AG04449 (cell line): ENCODE measurements at regions of chr10 and their contacts with region 1.

Region 1: GRCh38 chr10:122565728-122566206 is 5.2 kb downstream of the DMBT1 start:
- DNase-seq: peak; percentile 41
- H3K4me3 ChIP-seq: peak overlapping the region; percentile 10; the same call in 1 of the 2 replicates
- CTCF ChIP-seq: peak; percentile 80

Region 2: DNA sequence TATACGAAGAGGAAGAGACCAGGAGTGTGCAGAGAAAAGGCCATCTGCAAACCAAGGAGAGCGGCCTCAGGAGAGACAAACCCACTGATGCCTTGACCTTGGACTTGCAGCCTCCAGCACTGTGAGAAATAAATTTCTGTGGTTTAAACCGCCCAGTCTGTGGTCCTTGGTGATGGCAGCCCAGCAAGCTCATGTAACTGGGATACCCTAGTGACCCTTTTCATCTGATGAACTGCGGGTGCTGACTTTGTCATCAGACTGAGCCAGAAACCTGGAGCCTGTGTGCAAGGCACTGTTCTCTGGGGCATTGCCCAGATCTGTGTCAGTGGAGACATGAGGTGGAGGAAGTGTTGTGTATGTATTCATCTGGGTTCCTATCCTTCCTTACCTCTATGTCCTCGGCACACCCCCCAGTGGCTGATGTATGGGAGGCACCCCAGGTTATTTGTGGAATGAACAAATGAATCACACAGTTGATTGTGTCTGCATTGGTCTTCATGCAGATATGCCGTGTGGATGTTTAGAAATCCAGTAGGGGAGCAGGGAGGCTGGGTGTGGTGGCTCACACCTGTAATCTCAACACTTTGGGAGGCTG is 359.2 kb before region 1 on chr10:
- CTCF ChIA-PET with region 1: no interaction called
- POLR2A ChIA-PET with region 1: no interaction called
- DNase-seq: no peak
- H3K4me3 ChIP-seq: no peak overlapping the region
- CTCF ChIP-seq: no peak

Region 3: GRCh38 chr10:122323941-122324675 is 241.7 kb before region 1 on chr10:
- CTCF ChIA-PET with region 1: interaction called, 10 read pairs
- POLR2A ChIA-PET with region 1: no interaction called
- DNase-seq: no peak
- H3K4me3 ChIP-seq: no peak overlapping the region
- CTCF ChIP-seq: no peak

Region 4: DNA sequence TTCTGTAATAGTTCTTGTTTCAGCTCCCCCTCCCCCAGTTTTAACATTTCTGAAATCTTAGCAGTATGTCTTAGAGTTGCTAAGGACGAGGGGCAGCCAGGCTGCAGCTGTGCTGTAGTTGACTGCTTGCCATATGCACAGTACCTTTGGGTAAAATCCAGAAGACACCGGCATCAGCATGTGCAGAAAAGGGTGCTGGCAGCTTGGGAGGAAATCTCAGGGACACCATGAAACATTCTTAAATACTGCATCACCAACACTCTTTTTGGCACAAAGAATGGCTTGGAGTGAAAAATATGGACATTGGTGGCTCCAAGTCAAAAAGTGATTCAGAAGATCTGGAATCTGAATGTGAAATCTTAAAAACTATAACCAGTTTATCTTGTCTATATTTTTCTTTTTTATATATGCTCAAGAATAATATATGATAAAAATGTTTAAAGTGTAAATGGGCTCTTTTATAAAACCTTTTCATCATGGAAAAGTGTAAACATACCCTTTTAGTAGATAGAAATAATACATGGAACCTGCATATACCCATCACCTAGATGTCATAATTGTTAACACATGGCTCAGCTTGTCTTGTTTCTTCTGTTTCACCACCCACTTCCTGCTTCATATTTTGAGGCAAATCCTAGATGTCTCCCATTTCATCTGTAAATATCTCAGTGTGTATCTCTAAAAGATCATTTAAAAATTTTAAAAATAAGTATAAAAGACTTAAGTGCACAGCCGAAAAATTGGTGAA is 145.7 kb before region 1 on chr10:
- CTCF ChIA-PET with region 1: interaction called, 11 read pairs
- POLR2A ChIA-PET with region 1: no interaction called
- DNase-seq: no peak
- H3K4me3 ChIP-seq: no peak overlapping the region
- CTCF ChIP-seq: no peak

Region 5: GRCh38 chr10:122461367-122461728 is 104.4 kb before region 1 on chr10 and contains the start of gene HTRA1:
- CTCF ChIA-PET with region 1: interaction called, 29 read pairs
- POLR2A ChIA-PET with region 1: no interaction called
- DNase-seq: no peak
- H3K4me3 ChIP-seq: peak within 1 kb of the TSS; percentile 75
- CTCF ChIP-seq: no peak

Region 6: DNA sequence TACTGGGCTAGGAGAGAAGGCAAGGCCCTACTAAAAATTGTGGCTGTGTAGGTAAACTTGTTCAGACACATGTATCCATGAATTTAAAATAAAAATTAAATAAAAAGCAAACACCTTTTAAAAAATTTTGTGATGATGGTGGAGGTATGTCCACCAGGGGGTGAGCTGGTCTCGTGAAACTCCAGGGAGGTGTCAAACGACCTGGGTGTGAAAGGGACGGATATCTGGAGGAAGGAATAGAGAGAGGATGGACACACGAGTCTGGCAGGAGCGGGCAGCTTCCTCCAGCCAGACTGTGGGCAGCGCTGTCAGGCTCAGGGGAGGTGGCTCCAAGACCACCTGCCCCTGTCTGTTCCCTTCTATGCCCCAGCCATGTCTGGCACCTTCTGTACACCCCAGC is 40.0 kb before region 1 on chr10:
- CTCF ChIA-PET with region 1: interaction called, 12 read pairs
- POLR2A ChIA-PET with region 1: no interaction called
- DNase-seq: no peak
- H3K4me3 ChIP-seq: no peak overlapping the region
- CTCF ChIP-seq: no peak

Region 7: DNA sequence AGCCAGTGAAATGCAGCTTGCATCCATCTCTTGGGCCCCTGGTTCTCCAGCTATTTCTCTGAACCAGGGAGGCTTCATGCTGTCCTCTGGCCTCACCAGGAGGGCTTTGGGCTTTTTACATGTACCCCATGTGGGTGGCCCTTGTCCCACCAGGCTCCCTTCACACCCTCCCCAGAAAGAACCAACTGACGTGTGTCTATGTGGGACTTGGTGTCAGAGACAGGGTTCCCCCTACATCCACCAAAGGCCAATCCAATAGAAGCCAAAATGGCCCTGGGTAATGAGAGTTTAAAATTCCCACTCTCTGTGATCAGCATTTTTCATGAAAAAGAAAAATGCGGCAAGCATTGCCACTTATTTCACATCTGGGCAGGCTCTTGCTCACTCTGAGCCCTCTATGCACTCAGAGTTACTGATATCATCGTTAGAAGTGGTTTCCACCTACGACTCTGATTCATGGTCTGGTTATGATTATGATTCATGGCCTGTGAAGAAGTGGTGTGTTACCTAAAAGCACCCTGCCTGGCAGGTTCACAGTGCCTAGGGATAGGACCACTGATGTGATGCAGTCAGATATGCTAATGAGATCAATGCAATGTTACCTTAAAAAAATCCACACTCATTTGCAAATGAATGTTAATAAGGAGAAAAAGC is 722.0 kb after region 1 on chr10:
- CTCF ChIA-PET with region 1: no interaction called
- POLR2A ChIA-PET with region 1: no interaction called
- DNase-seq: no peak
- H3K4me3 ChIP-seq: no peak overlapping the region
- CTCF ChIP-seq: no peak